IMR-90 (cell line): ENCODE measurements at regions of chr6 and their contacts with region 1.

Region 1: GRCh38 chr6:112780498-112781096 is 433.5 kb downstream of the RFPL4B start:
- DNase-seq: peak; percentile 84
- ATAC-seq: peak; percentile 88
- H3K4me3 ChIP-seq: no peak overlapping the region
- H3K27ac ChIP-seq: no peak overlapping the region
- H3K4me1 ChIP-seq: peaks cover 2% of the 10 kb centered on the region; the same call in 1 of the 2 replicates
- H3K27me3 ChIP-seq: no peaks in the 10 kb centered on the region
- CTCF ChIP-seq: peak; percentile 88
- POLR2A ChIP-seq: no peak
- RAD21 ChIP-seq: peak; percentile 92

Region 2: GRCh38 chr6:112337209-112337638 is 443.4 kb before region 1 on chr6:
- CTCF ChIA-PET with region 1: no interaction called
- POLR2A ChIA-PET with region 1: no interaction called
- dilution Hi-C with region 1: no loop called
- in situ Hi-C with region 1: no loop called
- intact Hi-C with region 1: loop called (anchors 2 kb)
- DNase-seq: peak; percentile 83
- ATAC-seq: peak; percentile 91
- H3K4me3 ChIP-seq: no peak overlapping the region
- H3K27ac ChIP-seq: no peak overlapping the region
- H3K4me1 ChIP-seq: peaks cover 4% of the 10 kb centered on the region
- H3K27me3 ChIP-seq: no peaks in the 10 kb centered on the region
- CTCF ChIP-seq: peak; percentile 78
- POLR2A ChIP-seq: no peak
- RAD21 ChIP-seq: peak; percentile 80

Region 3: GRCh38 chr6:113122060-113122459 is 341.5 kb after region 1 on chr6:
- CTCF ChIA-PET with region 1: no interaction called
- POLR2A ChIA-PET with region 1: no interaction called
- dilution Hi-C with region 1: no loop called
- in situ Hi-C with region 1: no loop called
- intact Hi-C with region 1: loop called (anchors 1 kb)
- DNase-seq: peak; percentile 87
- ATAC-seq: peak; percentile 79
- H3K4me3 ChIP-seq: no peak overlapping the region
- H3K27ac ChIP-seq: no peak overlapping the region
- H3K4me1 ChIP-seq: peaks cover 13% of the 10 kb centered on the region
- H3K27me3 ChIP-seq: no peaks in the 10 kb centered on the region
- CTCF ChIP-seq: peak; percentile 56
- POLR2A ChIP-seq: no peak
- RAD21 ChIP-seq: peak; percentile 76

Region 4: GRCh38 chr6:113352029-113352801 is 571.6 kb after region 1 on chr6:
- CTCF ChIA-PET with region 1: no interaction called
- POLR2A ChIA-PET with region 1: no interaction called
- dilution Hi-C with region 1: no loop called
- in situ Hi-C with region 1: no loop called
- intact Hi-C with region 1: loop called (anchors 10 kb)
- DNase-seq: peak; percentile 84
- ATAC-seq: peak; percentile 78
- H3K4me3 ChIP-seq: no peak overlapping the region
- H3K27ac ChIP-seq: peak overlapping the region; percentile 99
- H3K4me1 ChIP-seq: peaks cover 25% of the 10 kb centered on the region
- H3K27me3 ChIP-seq: no peaks in the 10 kb centered on the region
- CTCF ChIP-seq: no peak
- POLR2A ChIP-seq: no peak
- RAD21 ChIP-seq: no peak

Region 5: DNA sequence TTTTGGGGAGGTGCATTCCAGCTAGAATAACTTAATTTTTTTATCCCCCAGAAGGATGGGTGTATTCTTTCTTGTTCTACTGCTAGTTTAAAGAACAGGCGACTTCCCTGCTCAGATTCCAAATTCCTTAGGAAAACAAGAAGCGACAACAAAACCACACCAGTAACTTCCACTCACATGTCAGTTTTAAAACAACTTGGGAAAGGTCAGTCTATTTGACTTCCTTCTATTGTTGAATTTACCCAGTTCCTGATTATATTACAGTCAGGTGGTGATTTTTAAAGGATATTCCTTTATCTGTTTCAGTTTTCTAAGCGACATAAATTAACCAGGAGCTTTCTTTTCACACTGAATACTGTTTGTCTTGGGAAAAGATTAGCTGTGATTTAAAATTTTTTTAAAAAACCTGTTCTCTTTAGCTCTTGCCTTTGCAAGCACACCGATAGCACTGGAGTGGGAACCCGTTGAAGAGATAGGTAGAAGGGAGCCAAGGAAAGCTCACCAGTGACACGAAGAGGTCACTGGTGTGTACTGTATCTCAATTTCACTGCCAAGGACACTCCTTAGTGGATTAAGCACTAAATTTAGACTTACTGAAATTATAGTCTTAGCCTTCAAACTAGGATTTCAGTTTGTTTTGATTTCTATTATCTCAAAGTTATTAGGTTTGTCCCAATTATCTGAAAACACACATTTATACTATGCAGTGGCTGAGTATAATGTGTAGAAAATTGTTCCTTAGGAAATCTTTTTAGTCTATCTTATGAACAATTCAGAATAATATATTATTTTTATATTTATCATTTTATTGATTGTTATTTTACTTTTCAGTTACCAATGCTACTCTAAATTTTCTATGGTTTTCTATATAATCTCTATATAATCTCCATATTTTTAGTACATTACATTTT is 1098.8 kb after region 1 on chr6:
- CTCF ChIA-PET with region 1: interaction called, 3 read pairs
- POLR2A ChIA-PET with region 1: no interaction called
- dilution Hi-C with region 1: no loop called
- in situ Hi-C with region 1: loop called (anchors 10 kb)
- intact Hi-C with region 1: loop called (anchors 1 kb)
- DNase-seq: peak; percentile 83
- ATAC-seq: peak; percentile 96
- H3K4me3 ChIP-seq: no peak overlapping the region
- H3K27ac ChIP-seq: no peak overlapping the region
- H3K4me1 ChIP-seq: peaks cover 5% of the 10 kb centered on the region; the same call in 1 of the 2 replicates
- H3K27me3 ChIP-seq: no peaks in the 10 kb centered on the region
- CTCF ChIP-seq: peak; percentile 81
- POLR2A ChIP-seq: no peak
- RAD21 ChIP-seq: peak; percentile 86